ENCODE measurements at regions of chr17 and their contacts with region 1.

Region 1: GRCh38 chr17:8383143-8383822 is at the start of gene RPL26:
- DNase-seq: peak; percentile 97 to 99
- ATAC-seq: peak; percentile 91 to 93
- H3K4me3 ChIP-seq: peak within 1 kb of the TSS; percentile 97
- H3K27ac ChIP-seq: peak within 1 kb of the TSS; percentile 93 to 99
- H3K4me1 ChIP-seq: peaks cover 44% of the 10 kb centered on the region
- CTCF ChIP-seq: peak; percentile 99
- EP300 ChIP-seq: no peak
- POLR2A ChIP-seq: peak; percentile 98
- RAD21 ChIP-seq: peak; percentile 26 to 86
- polyA plus RNA-seq, gene RPL26: 6,286 and 7,141 TPM in 2 replicates

Region 2: GRCh38 chr17:8393420-8394241 is 10.3 kb after region 1 on chr17:
- CTCF ChIA-PET with region 1: interaction called, 71 read pairs
- POLR2A ChIA-PET with region 1: interaction called, 6 read pairs
- DNase-seq: no peak
- ATAC-seq: peak in 1 of 2 experiments; percentile 14; a peak in 2 of 6 replicates
- H3K4me3 ChIP-seq: no peak overlapping the region
- H3K27ac ChIP-seq: no peak overlapping the region
- H3K4me1 ChIP-seq: peaks cover 6% of the 10 kb centered on the region; the same call in 1 of the 3 replicates
- CTCF ChIP-seq: no peak
- EP300 ChIP-seq: no peak
- POLR2A ChIP-seq: no peak
- RAD21 ChIP-seq: no peak

Region 3: GRCh38 chr17:8435245-8436168 is 52.2 kb after region 1 on chr17 and contains the start of gene NDEL1:
- CTCF ChIA-PET with region 1: interaction called, 10 read pairs
- POLR2A ChIA-PET with region 1: interaction called, 21 read pairs
- DNase-seq: peak; percentile 98 to 100
- ATAC-seq: peak; percentile 96 to 99
- H3K4me3 ChIP-seq: peak within 1 kb of the TSS; percentile 95
- H3K27ac ChIP-seq: peak within 1 kb of the TSS; percentile 94 to 95
- H3K4me1 ChIP-seq: peaks cover 10% of the 10 kb centered on the region; the same call in 2 of the 3 replicates
- CTCF ChIP-seq: no peak
- EP300 ChIP-seq: no peak
- POLR2A ChIP-seq: peak; percentile 84
- RAD21 ChIP-seq: no peak; a peak in 1 of 5 replicates
- polyA plus RNA-seq, gene NDEL1: 71.0 and 91.0 TPM in 2 replicates

Region 4: GRCh38 chr17:8586766-8587165 is 203.5 kb after region 1 on chr17:
- CTCF ChIA-PET with region 1: no interaction called
- POLR2A ChIA-PET with region 1: no interaction called
- DNase-seq: no peak
- ATAC-seq: no peak
- H3K4me3 ChIP-seq: no peak overlapping the region
- H3K27ac ChIP-seq: no peak overlapping the region
- H3K4me1 ChIP-seq: no peaks in the 10 kb centered on the region
- CTCF ChIP-seq: no peak
- EP300 ChIP-seq: no peak
- POLR2A ChIP-seq: no peak
- RAD21 ChIP-seq: no peak

Region 5: GRCh38 chr17:8649157-8650118 is 266.2 kb after region 1 on chr17:
- CTCF ChIA-PET with region 1: interaction called, 10 read pairs
- POLR2A ChIA-PET with region 1: no interaction called
- DNase-seq: no peak
- ATAC-seq: no peak
- H3K4me3 ChIP-seq: no peak overlapping the region
- H3K27ac ChIP-seq: no peak overlapping the region
- H3K4me1 ChIP-seq: peaks cover 6% of the 10 kb centered on the region; the same call in 1 of the 3 replicates
- CTCF ChIP-seq: no peak
- EP300 ChIP-seq: no peak
- POLR2A ChIP-seq: no peak
- RAD21 ChIP-seq: no peak

Region 6: GRCh38 chr17:8753976-8754440 is 370.7 kb after region 1 on chr17:
- CTCF ChIA-PET with region 1: interaction called, 23 read pairs
- POLR2A ChIA-PET with region 1: no interaction called
- DNase-seq: peak; percentile 64 to 65
- ATAC-seq: peak; percentile 84 to 89
- H3K4me3 ChIP-seq: no peak overlapping the region
- H3K27ac ChIP-seq: no peak overlapping the region
- H3K4me1 ChIP-seq: no peaks in the 10 kb centered on the region
- CTCF ChIP-seq: peak; percentile 66
- EP300 ChIP-seq: no peak
- POLR2A ChIP-seq: no peak
- RAD21 ChIP-seq: peak; percentile 41 to 53; a peak in 4 of 5 replicates

Region 7: GRCh38 chr17:8766731-8767130 is 383.4 kb after region 1 on chr17:
- CTCF ChIA-PET with region 1: interaction called, 11 read pairs
- POLR2A ChIA-PET with region 1: no interaction called
- DNase-seq: no peak
- ATAC-seq: no peak
- H3K4me3 ChIP-seq: no peak overlapping the region
- H3K27ac ChIP-seq: no peak overlapping the region
- H3K4me1 ChIP-seq: no peaks in the 10 kb centered on the region
- CTCF ChIP-seq: no peak
- EP300 ChIP-seq: no peak
- POLR2A ChIP-seq: no peak
- RAD21 ChIP-seq: no peak

Region 8: GRCh38 chr17:8785547-8786413 is 402.5 kb after region 1 on chr17:
- CTCF ChIA-PET with region 1: interaction called, 17 read pairs
- POLR2A ChIA-PET with region 1: interaction called, 3 read pairs
- DNase-seq: peak; percentile 69 to 72
- ATAC-seq: peak; percentile 87 to 98
- H3K4me3 ChIP-seq: no peak overlapping the region
- H3K27ac ChIP-seq: no peak overlapping the region
- H3K4me1 ChIP-seq: no peaks in the 10 kb centered on the region
- CTCF ChIP-seq: peak; percentile 85
- EP300 ChIP-seq: no peak
- POLR2A ChIP-seq: no peak
- RAD21 ChIP-seq: peak; percentile 88 to 91

Measured in A549 (cell line).